Activated CD4-positive, alpha-beta memory T cell treated with anti-CD3 and anti-CD28 coated beads for 36 hours (primary cell): ENCODE measurements at regions of chr7 and their contacts with region 1.

Region 1: GRCh38 chr7:7542251-7542835 is 6.7 kb upstream of the COL28A1 start:
- DNase-seq: no peak
- H3K4me3 Mint-ChIP-seq: no peak overlapping the region
- H3K27ac Mint-ChIP-seq: no peak overlapping the region
- H3K4me1 Mint-ChIP-seq: no peaks in the 10 kb centered on the region
- H3K27me3 Mint-ChIP-seq: no peaks in the 10 kb centered on the region

Region 2: GRCh38 chr7:6530626-6531491 is 1011.5 kb before region 1 on chr7:
- CTCF ChIA-PET with region 1: no interaction called
- POLR2A ChIA-PET with region 1: no interaction called
- intact Hi-C with region 1: no loop called
- DNase-seq: peak; percentile 68
- H3K4me3 Mint-ChIP-seq: peak overlapping the region; percentile 61
- H3K27ac Mint-ChIP-seq: no peak overlapping the region
- H3K4me1 Mint-ChIP-seq: peaks cover 16% of the 10 kb centered on the region
- H3K27me3 Mint-ChIP-seq: peaks cover 45% of the 10 kb centered on the region

Region 3: GRCh38 chr7:7424151-7424873 is 118.0 kb before region 1 on chr7:
- CTCF ChIA-PET with region 1: no interaction called
- POLR2A ChIA-PET with region 1: no interaction called
- intact Hi-C with region 1: loop called (anchors 2 kb)
- DNase-seq: peak; percentile 41
- H3K4me3 Mint-ChIP-seq: peak overlapping the region; percentile 54
- H3K27ac Mint-ChIP-seq: no peak overlapping the region
- H3K4me1 Mint-ChIP-seq: peaks cover 5% of the 10 kb centered on the region
- H3K27me3 Mint-ChIP-seq: no peaks in the 10 kb centered on the region